RWPE1 (cell line): ENCODE measurements at regions of chr1 and their contacts with region 1.

Region 1: GRCh38 chr1:202184750-202185460 is 8.7 kb upstream of the LGR6 start:
- DNase-seq: peak; percentile 93
- H3K27ac ChIP-seq: no peak overlapping the region
- CTCF ChIP-seq: peak; percentile 85

Region 2: GRCh38 chr1:202200112-202200566 is 15.2 kb after region 1 on chr1:
- CTCF ChIA-PET with region 1: interaction called, 14 read pairs
- POLR2A ChIA-PET with region 1: no interaction called
- DNase-seq: peak; percentile 92
- H3K27ac ChIP-seq: peak overlapping the region; percentile 94
- CTCF ChIP-seq: no peak

Region 3: DNA sequence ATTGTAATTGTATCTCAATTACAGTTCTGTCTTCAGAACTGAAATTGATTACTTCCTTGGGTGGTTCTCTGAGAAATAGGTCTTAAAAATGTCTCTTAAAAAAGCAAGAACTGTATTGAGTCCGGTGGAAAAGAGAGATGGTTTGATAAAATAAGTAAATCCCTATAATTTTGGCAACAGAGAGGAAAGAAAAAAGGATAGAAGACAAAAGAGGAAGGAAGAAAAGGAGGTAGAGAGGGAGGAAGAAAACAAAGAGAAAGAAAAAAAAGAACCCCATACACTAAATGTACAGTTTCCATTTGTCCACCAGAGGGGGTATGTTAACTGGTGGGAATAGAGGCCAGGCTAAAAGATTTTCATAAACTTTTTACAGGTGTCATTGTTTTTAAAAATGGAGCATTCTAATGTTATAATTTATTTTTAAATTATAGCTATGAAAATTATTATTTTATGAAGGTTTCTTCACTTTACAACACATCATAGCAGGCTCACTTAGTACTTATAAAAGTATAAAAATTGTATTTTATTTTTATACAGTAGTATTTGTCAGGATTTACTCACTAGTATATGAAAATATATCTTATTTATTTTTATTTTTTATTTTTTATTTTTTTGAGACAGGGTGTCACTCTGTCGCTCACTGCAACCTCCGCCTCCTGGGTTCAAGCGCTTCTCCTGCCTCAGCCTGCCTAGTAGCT is 158.9 kb after region 1 on chr1:
- CTCF ChIA-PET with region 1: interaction called, 11 read pairs
- POLR2A ChIA-PET with region 1: no interaction called
- DNase-seq: peak; percentile 59
- H3K27ac ChIP-seq: no peak overlapping the region
- CTCF ChIP-seq: peak; percentile 84